Head of caudate nucleus (tissue), 42 donors: ENCODE measurements at regions of chr3 and their contacts with region 1.

Region 1: DNA sequence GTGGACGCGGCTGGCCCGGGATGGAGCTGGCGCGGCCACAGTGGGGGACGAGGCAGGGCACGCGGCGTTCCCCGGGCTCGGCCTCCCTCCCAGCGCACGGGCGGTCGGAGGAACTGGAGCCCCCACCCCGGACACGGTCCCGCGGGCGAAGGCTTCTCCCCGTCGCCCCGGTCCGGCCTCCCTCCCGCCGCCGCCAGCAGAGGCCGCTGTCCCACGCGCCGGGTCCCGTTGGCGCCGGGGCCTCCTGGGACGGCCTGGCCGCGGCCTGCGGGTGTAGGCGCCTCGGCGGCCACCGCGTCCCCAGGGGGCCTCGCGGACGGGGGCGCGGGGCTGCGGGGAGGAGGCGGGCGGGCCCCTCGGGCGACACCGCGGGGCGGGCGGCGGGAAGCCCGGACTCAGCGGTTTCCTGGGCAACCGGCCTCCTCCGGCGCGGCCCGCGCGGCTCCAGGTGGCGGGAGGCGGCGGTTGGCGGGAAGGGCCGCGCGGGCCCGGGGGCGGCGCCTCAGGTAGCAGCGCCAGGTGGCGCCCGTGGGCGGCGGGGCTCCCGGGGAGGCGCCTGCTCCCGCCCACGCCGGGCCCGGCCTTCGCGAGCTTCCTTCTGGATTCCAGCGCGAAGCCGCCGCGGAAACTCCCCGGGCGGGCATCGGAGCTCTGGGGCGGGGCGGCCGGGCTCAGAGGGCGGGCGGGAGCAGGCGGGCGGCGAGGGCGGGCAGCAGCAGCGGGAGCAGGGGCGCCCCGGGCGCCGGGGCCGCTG is 26.7 kb downstream of the MELTF start:
- DNase-seq: peak in 41 of 42 donors; percentile 16 to 89 (median 76)

Region 2: GRCh38 chr3:197186887-197187588 is 184.2 kb after region 1 on chr3:
- intact Hi-C with region 1: loop called (anchors 5 kb)
- DNase-seq: peak in 16 of 42 donors; percentile 13 to 70 (median 32)